ENCODE measurements at regions of chr17 and their contacts with region 1.

Region 1: DNA sequence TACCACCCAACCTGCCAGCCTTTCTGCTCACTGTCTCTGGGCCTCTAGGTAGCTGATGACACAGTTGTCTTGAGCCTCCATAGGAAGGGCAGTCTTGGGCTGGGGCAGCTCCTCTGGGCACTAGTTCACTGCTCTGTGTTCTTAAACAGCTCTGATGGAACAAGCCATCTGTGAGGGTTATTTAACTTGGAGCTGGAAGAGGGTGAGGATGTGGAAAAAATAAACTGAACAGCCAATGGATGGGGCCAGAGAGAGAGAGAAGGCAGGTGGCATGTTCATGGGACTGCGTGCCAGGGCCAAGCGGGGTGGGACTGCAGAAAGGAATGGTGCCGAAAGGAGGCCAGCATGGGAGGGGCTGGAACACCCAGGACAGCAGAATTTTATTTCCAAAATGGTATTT is 52.6 kb downstream of the HIC1 start:
- DNase-seq: no peak
- H3K4me3 ChIP-seq: no peak overlapping the region
- H3K27ac ChIP-seq: no peak overlapping the region
- H3K4me1 ChIP-seq: no peaks in the 10 kb centered on the region
- H3K27me3 ChIP-seq: no peaks in the 10 kb centered on the region
- CTCF ChIP-seq: no peak

Region 2: GRCh38 chr17:1847191-1847590 is 260.3 kb before region 1 on chr17:
- CTCF ChIA-PET with region 1: no interaction called
- dilution Hi-C with region 1: no loop called
- in situ Hi-C with region 1: no loop called
- intact Hi-C with region 1: no loop called
- DNase-seq: no peak
- H3K4me3 ChIP-seq: no peak overlapping the region
- H3K27ac ChIP-seq: no peak overlapping the region
- H3K4me1 ChIP-seq: no peaks in the 10 kb centered on the region
- H3K27me3 ChIP-seq: no peaks in the 10 kb centered on the region
- CTCF ChIP-seq: no peak

Region 3: DNA sequence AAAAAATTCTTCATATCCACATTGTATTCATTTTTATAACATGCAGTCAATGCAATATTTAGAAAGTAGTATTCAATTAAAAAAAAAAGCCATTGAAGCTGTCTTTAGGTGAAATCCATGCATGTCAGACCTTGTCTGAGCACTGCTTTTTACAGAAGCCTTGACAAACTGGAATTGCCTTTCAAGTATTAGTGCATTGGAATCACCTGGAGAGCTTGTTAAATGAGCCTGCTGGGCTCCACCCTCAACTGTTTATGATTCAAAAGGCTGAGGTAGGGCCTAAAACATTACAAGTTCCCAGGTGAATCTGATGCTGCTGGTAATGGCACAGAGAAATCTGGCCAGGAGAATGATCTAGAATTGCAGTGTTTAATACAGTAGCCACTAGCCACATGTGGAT is 33.2 kb after region 1 on chr17:
- CTCF ChIA-PET with region 1: no interaction called
- dilution Hi-C with region 1: loop called (anchors 5 kb)
- in situ Hi-C with region 1: no loop called
- intact Hi-C with region 1: no loop called
- DNase-seq: peak; percentile 32
- H3K4me3 ChIP-seq: no peak overlapping the region
- H3K27ac ChIP-seq: no peak overlapping the region
- H3K4me1 ChIP-seq: no peaks in the 10 kb centered on the region
- H3K27me3 ChIP-seq: no peaks in the 10 kb centered on the region
- CTCF ChIP-seq: no peak